Right ventricle myocardium inferior (tissue), 1 donor: ENCODE measurements at regions of chr22 and their contacts with region 1.

Region 1: GRCh38 chr22:31943976-31944699 is at the start of gene YWHAH:
- DNase-seq: peak; percentile 98
- ATAC-seq: peak; percentile 96
- total RNA-seq, gene YWHAH: 85.3 TPM

Region 2: DNA sequence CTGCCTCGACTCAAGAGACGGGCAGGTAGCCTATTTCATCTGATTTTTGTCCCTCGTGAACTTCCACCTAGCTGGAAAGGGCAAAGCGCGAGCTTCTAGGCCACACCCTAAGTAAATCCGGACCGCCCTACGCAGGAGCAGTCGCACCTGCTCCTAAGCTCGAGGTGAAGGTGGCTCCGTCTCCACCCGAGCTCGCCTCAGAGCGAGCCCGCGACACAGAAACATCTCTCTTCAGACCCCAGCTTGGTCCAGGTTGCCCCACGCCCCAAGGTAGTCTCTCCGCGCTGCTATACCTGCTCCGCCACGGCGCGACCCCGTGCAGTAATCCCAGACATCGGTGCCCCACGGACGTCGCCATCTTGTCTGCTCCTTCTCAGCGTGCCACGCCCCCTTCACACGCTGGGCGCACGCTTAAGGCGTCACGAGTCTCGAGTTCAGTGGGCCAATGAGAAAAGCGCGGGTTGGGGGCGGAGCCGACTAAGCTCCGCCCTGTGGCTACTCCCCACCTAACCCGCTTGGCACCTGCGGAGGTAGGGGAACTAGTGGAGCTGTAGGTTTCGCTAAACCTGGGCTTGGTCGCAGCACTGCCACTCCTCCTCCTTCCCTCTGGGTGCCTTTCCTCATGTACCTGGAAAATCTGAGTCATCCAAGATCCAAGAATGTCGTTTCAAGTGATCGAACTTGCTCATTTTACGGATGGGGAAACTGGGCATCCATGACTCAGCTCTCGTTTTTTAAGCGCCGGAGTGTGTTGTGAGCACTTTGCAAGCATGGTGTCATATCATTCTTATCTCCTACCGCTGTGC is 282.1 kb before region 1 on chr22 and contains the start of gene PISD:
- intact Hi-C with region 1: loop called (anchors 10 kb)
- DNase-seq: peak; percentile 98
- ATAC-seq: peak; percentile 100
- total RNA-seq, gene PISD: 18.4 TPM

Region 3: DNA sequence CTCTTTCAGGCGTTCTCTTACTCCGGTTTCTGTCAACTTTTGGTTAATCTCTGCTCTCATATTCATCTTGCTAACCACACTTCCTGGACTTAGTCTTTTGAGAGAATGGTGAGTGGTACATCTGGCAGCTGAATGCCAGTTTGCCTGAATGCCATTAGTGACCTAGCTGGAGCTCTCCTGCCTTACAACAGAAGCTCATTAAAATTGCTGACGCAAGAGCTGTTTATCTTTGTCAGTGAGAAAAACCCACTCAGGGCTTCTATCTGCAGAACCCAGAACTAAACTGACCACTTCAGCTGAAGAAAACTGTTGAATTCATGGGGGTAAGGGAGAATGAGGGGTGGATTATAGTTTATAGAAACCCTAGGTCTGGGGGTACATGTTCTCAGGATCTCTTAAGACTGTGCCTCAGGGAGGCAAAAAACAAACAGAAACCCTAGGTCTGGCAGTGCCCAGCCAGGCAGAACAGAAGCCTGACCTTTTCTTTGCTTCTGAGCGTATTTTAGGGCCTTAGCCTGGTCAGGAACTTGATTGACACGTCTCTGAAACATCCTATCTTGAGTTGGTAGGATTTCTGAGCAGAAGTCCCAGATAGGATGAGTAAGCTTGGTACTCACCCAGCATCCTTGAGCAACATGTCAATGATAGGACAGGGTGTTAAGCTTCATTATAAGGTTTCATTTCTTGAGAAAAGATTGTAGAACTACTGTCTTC is 52.6 kb before region 1 on chr22:
- intact Hi-C with region 1: loop called (anchors 10 kb)
- DNase-seq: no peak
- ATAC-seq: no peak

Region 4: DNA sequence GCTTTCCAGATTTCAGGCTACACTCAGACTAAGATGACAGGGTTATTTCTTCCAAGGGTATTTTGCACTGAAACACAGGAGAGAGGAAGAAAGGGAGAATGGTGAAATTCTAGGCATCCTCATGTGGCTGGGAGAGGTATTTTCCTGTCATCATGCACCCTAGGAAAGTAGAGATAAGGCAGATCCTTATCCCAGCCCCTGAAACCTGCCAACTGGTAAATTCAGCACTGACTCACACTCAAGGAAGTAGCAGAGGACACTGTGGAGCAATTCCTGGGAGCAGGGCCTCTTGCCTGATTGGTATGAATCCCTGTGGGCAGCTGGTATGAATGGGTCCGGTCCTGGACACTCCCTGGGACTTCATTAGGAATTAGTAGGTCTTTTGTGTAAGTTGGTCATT is 61.3 kb after region 1 on chr22:
- intact Hi-C with region 1: no loop called
- DNase-seq: no peak
- ATAC-seq: no peak

Region 5: GRCh38 chr22:32024796-32025195 is 80.7 kb after region 1 on chr22:
- intact Hi-C with region 1: no loop called
- DNase-seq: no peak
- ATAC-seq: no peak